Activated CD4-positive, alpha-beta memory T cell treated with anti-CD3 and anti-CD28 coated beads, Interleukin-2, amount 10 ng/mL, durations not matched to agents 7 days and 5 days (primary cell): ENCODE measurements at regions of chr22 and their contacts with region 1.

Region 1: GRCh38 chr22:40177738-40178416 is at the start of gene TNRC6B:
- DNase-seq: peak; percentile 82
- H3K4me3 Mint-ChIP-seq: peak within 1 kb of the TSS; percentile 92
- H3K27ac Mint-ChIP-seq: peak within 1 kb of the TSS; percentile 92
- H3K4me1 Mint-ChIP-seq: peaks cover 49% of the 10 kb centered on the region
- H3K27me3 Mint-ChIP-seq: no peaks in the 10 kb centered on the region
- total RNA-seq, gene TNRC6B: 51.0 to 55.0 TPM

Region 2: GRCh38 chr22:40055143-40055883 is 122.6 kb before region 1 on chr22:
- CTCF ChIA-PET with region 1: interaction called, 4 read pairs
- POLR2A ChIA-PET with region 1: interaction called, 66 read pairs
- DNase-seq: peak; percentile 35
- H3K4me3 Mint-ChIP-seq: peak overlapping the region; percentile 62
- H3K27ac Mint-ChIP-seq: peak overlapping the region; percentile 93
- H3K4me1 Mint-ChIP-seq: peaks cover 75% of the 10 kb centered on the region
- H3K27me3 Mint-ChIP-seq: no peaks in the 10 kb centered on the region

Region 3: GRCh38 chr22:40193429-40194421 is 15.8 kb after region 1 on chr22:
- CTCF ChIA-PET with region 1: interaction called, 5 read pairs
- POLR2A ChIA-PET with region 1: interaction called, 59 read pairs
- DNase-seq: no peak
- H3K4me3 Mint-ChIP-seq: no peak overlapping the region
- H3K27ac Mint-ChIP-seq: no peak overlapping the region
- H3K4me1 Mint-ChIP-seq: peaks cover 42% of the 10 kb centered on the region
- H3K27me3 Mint-ChIP-seq: no peaks in the 10 kb centered on the region

Region 4: GRCh38 chr22:40238425-40239344 is 60.8 kb after region 1 on chr22:
- CTCF ChIA-PET with region 1: interaction called, 3 read pairs
- POLR2A ChIA-PET with region 1: interaction called, 21 read pairs
- DNase-seq: peak; percentile 42
- H3K4me3 Mint-ChIP-seq: peak overlapping the region; percentile 7
- H3K27ac Mint-ChIP-seq: peak overlapping the region; percentile 29
- H3K4me1 Mint-ChIP-seq: peaks cover 65% of the 10 kb centered on the region
- H3K27me3 Mint-ChIP-seq: no peaks in the 10 kb centered on the region

Region 5: GRCh38 chr22:40332319-40332781 is 154.5 kb after region 1 on chr22:
- CTCF ChIA-PET with region 1: interaction called, 3 read pairs
- POLR2A ChIA-PET with region 1: interaction called, 11 read pairs
- DNase-seq: no peak
- H3K4me3 Mint-ChIP-seq: no peak overlapping the region
- H3K27ac Mint-ChIP-seq: peak overlapping the region; percentile 68
- H3K4me1 Mint-ChIP-seq: peaks cover 82% of the 10 kb centered on the region
- H3K27me3 Mint-ChIP-seq: no peaks in the 10 kb centered on the region